ENCODE measurements at regions of chr5 and their contacts with region 1.

Region 1: GRCh38 chr5:159316519-159317383 is 13.5 kb downstream of the IL12B start:
- DNase-seq: peak in 2 of 6 donors; percentile 19 to 20
- ATAC-seq: peak in 3 of 4 donors; percentile 60 to 77 (median 67)
- H3K4me3 ChIP-seq: no peak overlapping the region
- H3K27ac ChIP-seq: no peak overlapping the region
- H3K4me1 ChIP-seq: no peaks in the 10 kb centered on the region
- H3K27me3 ChIP-seq: no peaks in the 10 kb centered on the region
- CTCF ChIP-seq: peak in 3 of 4 donors; percentile 18 to 29 (median 19)

Region 2: DNA sequence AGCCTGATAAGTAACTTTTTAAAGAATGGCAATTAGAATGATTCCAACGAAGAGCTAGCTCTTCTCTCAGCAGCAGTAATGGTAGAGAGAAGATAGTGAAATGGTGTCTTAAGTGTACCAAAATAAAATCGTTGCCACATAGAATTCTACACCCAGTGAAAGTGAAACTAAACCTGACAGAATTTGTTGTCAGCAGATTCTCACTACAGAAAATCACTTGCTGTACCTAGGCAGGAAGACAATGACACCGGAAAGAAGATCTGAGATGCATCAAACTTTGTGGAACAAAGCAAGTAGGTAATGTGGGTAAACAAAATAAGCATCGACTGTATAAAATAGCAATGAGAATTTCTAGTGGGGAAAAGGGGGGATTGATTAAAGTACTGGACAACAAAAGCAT is 196.3 kb before region 1 on chr5:
- intact Hi-C with region 1: no loop called
- DNase-seq: no peak
- ATAC-seq: no peak
- H3K4me3 ChIP-seq: no peak overlapping the region
- H3K27ac ChIP-seq: no peak overlapping the region
- H3K4me1 ChIP-seq: no peaks in the 10 kb centered on the region
- H3K27me3 ChIP-seq: peaks cover 0 to 3% (median 0%) of the 10 kb centered on the region in 4 donors
- CTCF ChIP-seq: no peak

Region 3: DNA sequence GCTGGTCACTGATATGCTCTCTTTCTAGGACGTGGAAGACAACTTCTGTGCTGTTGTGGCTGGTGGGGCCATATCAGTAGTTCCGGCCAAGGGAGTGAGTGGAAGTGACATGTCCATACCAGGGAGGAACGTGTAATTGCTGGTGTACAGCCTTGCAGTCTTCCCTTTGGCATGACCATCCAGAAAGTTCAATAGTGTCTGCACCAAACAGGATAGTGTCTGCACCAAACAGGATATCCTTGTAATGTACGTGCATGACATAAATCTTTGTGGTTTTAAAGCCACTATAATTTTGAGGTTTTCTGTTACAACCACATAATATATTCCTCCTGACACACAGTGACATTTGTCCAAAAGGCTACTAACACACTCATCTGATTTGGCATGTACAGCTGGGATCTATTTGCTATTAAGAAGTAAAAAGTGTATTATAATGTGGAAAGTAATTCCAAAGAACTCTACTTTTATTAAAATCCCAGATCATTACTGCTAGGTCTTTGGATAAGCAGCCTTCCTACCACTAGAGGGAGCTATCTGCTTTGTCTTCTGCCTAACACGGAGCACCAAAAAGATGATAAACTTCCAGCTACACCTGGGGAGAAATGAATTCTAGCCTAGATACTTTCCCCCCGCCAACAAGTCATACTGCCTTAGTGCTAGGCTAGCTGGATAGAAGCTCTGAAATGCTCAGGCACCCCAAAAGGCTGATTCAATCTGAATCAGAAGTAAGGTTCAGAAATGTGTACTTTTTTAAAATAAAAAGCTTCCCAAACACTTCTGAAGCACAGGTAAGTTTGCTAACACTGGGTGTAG is 160.1 kb before region 1 on chr5:
- intact Hi-C with region 1: loop called in 1 of 3 experiments (anchors 10 kb)
- DNase-seq: peak in 2 of 6 donors; percentile 33 to 42
- ATAC-seq: peak; percentile 70 to 94 (median 90)
- H3K4me3 ChIP-seq: no peak overlapping the region
- H3K27ac ChIP-seq: no peak overlapping the region
- H3K4me1 ChIP-seq: no peaks in the 10 kb centered on the region
- H3K27me3 ChIP-seq: no peaks in the 10 kb centered on the region
- CTCF ChIP-seq: peak; percentile 52 to 88 (median 73)

Measured in pancreas (tissue), 10 donors.